Panc1 (cell line): ENCODE measurements at regions of chr17 and their contacts with region 1.

Region 1: DNA sequence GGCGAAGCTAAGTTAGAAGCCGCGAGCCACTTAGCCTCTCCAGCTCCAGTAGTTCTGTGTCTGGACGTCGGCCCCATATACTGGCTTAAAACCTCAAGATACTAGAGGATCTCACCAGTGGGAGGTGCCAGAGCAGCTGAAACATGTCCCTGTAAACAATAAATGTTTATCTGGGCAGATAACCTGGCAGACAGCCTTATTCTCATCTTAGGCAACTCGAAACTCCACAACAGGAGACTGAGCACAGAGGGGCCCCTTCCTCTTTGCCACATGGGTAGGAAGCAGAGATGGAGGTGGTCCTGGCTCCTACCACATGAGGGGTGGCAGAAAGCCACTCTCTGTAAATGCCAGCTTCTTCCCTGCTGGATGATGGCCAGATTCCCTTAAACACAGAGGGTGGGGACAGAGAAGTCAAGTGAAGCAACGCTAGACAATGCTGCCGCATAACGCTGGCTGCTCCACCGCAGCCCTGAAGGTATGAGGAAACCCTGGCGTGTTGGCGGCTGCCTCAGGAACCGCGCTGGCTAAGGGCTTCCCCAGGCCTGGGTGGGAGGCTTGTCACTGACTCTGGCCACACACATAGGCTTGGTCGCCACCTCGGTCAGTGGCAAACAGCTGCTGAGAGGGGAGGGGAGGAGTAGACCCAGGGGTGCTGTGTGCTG is 67.9 kb downstream of the HIC1 start:
- DNase-seq: no peak
- ATAC-seq: no peak; the same call in 1 of the 2 replicates
- H3K4me3 ChIP-seq: no peak overlapping the region
- H3K27ac ChIP-seq: no peak overlapping the region
- H3K4me1 ChIP-seq: no peaks in the 10 kb centered on the region
- H3K27me3 ChIP-seq: no peaks in the 10 kb centered on the region
- CTCF ChIP-seq: no peak

Region 2: GRCh38 chr17:2192367-2193057 is 69.7 kb after region 1 on chr17:
- CTCF ChIA-PET with region 1: no interaction called
- POLR2A ChIA-PET with region 1: no interaction called
- in situ Hi-C with region 1: no loop called
- intact Hi-C with region 1: no loop called
- DNase-seq: no peak
- ATAC-seq: no peak
- H3K4me3 ChIP-seq: no peak overlapping the region
- H3K27ac ChIP-seq: no peak overlapping the region
- H3K4me1 ChIP-seq: no peaks in the 10 kb centered on the region
- H3K27me3 ChIP-seq: no peaks in the 10 kb centered on the region
- CTCF ChIP-seq: no peak

Region 3: DNA sequence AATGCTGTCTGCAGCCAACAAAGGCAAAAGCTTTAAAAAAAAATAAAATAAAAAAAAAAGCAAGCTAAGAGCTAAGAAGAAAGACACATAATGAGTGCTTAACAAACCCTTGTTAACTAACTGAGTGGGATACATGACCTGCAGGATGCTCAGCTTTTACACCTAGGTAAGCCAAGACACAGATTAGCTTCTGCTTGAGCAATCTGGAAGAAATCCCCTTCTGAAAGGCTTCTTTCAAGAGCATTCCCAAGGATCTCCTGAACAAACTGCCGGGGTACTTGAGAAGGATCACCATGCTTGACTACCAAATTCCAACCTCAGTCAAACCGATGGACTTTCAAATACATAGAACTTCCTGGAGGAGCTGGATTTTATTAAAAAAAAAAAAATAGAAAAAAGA is 88.0 kb after region 1 on chr17:
- CTCF ChIA-PET with region 1: no interaction called
- POLR2A ChIA-PET with region 1: interaction called, 10 read pairs
- in situ Hi-C with region 1: no loop called
- intact Hi-C with region 1: no loop called
- DNase-seq: no peak
- ATAC-seq: no peak
- H3K4me3 ChIP-seq: no peak overlapping the region
- H3K27ac ChIP-seq: no peak overlapping the region
- H3K4me1 ChIP-seq: no peaks in the 10 kb centered on the region
- H3K27me3 ChIP-seq: no peaks in the 10 kb centered on the region
- CTCF ChIP-seq: no peak